ENCODE measurements at regions of chr5 and their contacts with region 1.

Region 1: DNA sequence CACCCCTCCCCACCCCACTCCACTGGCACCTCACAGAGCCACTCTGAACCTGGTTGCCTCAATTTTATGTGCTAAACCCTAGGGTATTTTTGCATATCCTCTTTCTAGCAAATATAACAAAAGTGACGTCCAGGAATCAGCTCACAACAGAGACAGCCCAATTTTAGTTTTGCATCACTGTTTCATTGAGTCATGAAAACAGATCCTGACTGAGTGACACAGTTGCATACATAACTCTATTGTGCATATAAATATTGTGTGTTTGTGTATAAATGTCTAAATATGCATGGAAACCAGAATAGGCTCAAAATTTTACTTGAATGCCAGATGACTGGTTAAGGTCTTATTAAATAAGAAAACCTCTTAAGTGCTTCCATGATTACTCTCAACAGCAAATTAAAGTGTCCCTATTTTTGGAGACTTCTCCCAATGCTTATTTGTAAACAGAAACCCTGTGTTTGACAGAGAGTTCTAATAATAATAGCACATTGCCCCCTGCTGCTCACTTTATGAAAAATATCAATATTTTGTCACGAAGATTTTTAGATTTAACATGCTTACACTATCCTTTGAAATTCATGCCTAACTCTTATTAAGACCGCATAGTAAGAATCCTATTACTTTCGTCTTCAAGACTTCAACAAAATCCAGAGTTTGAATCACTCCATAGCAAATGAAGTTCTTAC is 75.5 kb upstream of the PRRC1 start:
- DNase-seq: peak in 3 of 42 donors; percentile 28 to 55 (median 54)

Region 2: DNA sequence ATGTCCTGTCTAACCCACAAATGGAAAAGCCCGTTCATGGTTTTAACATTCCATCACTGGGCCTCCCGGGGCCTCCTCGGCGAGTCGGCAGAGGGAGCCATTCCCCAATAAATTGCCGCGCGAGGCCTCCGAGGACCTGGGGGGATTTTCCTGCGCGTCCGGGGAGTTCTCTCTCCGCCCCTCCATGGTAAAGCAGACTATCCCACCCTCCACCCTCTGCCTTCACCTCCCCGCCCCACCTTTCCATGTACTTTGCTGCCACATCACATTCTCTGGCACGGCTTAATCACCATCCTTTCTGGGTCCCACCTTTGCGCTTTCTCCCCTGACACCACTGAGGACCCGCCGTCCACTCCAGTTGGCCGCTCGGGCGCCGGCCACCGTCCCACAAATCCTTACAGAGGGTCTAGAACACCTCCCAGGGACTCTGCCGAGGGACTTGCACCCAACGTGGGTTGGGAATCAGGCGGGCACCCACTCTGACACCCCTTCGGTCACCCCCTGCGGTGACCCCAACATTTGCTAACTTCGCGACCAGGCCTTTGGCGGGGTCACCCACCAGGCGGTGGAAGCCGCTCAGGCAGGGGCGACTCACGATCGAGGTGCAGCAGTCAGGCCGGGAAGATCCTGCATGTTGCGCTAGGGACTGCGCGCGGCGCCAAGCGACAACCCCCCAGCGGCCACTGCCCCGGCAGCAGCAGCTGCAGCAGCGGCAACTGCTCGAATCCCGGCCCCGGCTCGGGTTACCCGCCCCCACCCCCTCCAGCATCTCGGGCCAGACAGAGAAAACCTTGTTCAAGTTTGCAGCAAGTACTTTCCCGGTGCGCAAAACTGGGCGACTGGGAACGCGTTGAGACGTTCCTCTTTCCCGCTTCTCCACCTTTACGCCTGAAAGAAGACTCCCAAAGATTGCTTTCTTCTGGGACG is 151.7 kb before region 1 on chr5 and contains the start of gene MEGF10:
- intact Hi-C with region 1: loop called (anchors 2 kb)
- DNase-seq: peak; percentile 65 to 93 (median 86)

Region 3: DNA sequence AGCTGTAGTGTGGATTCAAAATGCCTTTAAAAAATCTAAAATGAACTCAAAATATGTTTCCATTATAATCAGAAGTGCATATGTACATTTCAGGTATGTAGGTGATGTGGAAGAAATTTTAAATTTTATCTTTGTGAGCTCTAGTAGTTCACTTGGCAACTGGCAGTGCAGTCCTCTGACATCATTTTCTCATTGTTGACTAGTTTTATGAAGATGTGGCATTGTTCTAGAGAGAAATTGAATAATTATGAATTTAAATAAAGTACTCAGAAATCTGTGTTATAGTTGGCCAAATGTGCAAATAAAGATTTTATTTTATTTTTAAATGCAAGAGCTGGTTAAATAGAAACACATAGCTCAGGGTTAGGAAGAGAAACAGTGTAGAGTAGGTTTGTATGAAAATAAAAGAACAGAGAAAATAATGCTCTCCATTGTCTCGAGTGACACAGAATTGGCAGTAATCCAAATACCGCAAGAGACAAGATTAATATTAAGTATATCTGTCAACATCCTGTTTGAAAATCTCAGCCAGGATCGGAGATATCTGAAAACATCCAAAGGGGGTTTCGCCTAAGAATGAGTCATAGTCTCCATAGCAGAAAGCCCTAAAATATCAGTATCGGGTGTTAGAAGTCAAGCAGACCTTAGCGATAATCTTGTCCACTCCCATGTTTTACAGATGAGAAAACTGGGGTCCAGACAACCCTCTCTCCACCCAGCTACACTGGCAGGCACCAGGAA is 450.7 kb after region 1 on chr5:
- intact Hi-C with region 1: no loop called
- DNase-seq: peak in 2 of 42 donors; percentile 16 to 35